ENCODE measurements at regions of chr13 and their contacts with region 1.

Region 1: DNA sequence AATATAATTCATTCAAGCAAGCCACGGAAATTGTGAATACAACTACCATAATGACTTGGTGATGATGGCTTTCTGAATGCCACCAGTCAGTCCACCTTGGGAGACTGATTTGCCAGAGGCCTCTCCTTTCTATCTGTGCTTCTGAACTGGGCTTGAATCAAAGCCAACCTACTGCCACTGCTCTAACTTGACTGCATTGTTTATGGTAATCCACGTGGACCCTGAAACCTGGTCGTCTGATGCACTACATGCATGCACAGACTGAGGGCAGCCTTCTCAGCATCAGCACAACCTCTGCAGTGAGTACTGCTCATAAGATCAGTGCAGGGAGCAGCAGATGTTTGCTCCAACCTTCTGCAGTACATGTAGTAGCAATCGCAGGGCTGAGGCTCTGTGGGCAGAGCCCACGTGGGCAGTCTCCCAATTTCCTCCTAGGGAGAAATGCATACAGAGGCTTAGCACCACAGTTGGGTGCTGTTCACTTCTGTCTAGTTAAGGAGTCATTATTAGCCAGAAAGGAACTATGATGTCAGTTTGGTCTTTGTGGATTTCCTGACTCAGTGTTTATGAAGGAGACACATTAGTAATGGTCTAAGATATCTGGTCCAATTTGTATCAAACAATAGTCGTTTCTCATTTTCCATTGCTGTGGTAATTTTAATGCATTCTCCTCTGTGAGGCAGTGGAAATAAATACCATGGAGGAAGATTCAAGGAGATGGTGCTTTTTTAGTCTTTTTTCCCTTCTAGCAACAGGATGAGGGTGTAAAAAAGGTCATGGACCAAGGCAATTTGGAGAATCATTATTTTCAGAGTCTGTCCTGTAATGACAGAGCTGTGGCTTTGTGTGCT is 82.5 kb downstream of the AKAP11 start:
- DNase-seq: peak; percentile 27 to 52 (median 37)
- H3K4me3 ChIP-seq: peak overlapping the region in 1 of 2 donors; percentile 10
- H3K4me3 Mint-ChIP-seq: peak overlapping the region; percentile 56 to 86 (median 74)
- H3K27ac ChIP-seq: peak overlapping the region; percentile 54
- H3K27ac Mint-ChIP-seq: peak overlapping the region; percentile 91 to 99 (median 93)
- H3K4me1 ChIP-seq: peaks cover 43% of the 10 kb centered on the region
- H3K4me1 Mint-ChIP-seq: peaks cover 28 to 46% (median 38%) of the 10 kb centered on the region in 4 donors
- H3K27me3 ChIP-seq: no peaks in the 10 kb centered on the region
- H3K27me3 Mint-ChIP-seq: no peaks in the 10 kb centered on the region

Region 2: GRCh38 chr13:41827507-41828213 is 526.8 kb before region 1 on chr13:
- CTCF ChIA-PET with region 1: no interaction called
- POLR2A ChIA-PET with region 1: no interaction called
- intact Hi-C with region 1: no loop called
- DNase-seq: no peak
- H3K4me3 ChIP-seq: no peak overlapping the region
- H3K4me3 Mint-ChIP-seq: no peak overlapping the region
- H3K27ac ChIP-seq: no peak overlapping the region
- H3K27ac Mint-ChIP-seq: peak overlapping the region in 1 of 7 donors; percentile 16
- H3K4me1 ChIP-seq: no peaks in the 10 kb centered on the region
- H3K4me1 Mint-ChIP-seq: no peaks in the 10 kb centered on the region
- H3K27me3 ChIP-seq: no peaks in the 10 kb centered on the region
- H3K27me3 Mint-ChIP-seq: no peaks in the 10 kb centered on the region

Region 3: DNA sequence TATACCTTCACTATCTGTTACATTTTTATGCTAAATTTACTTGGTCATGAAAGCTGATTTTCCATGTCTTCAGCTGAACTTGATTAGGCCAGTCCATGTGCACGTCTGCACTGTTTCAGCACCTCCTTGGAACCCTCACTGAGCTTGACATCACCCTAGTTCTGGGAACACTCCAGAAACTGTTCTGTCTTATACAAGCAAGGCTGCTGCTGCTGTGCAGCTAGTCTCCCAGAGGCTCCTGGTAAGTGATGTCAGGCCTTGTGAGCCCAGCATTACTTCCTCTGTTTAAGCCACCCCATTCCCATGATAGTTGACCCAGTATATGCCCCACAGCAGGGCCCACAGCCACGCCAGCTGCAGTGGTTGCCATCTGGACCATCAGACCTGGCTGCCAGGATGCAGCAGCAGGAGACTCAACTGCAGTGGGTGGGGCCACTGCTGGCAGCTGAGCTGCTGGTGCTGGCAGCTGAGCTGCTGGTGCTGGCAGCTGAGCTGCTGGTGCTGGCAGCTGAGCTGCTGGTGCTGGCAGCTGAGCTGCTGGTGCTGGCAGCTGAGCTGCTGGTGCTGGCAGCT is 173.0 kb before region 1 on chr13:
- CTCF ChIA-PET with region 1: no interaction called
- POLR2A ChIA-PET with region 1: no interaction called
- intact Hi-C with region 1: no loop called
- DNase-seq: no peak
- H3K4me3 ChIP-seq: no peak overlapping the region
- H3K4me3 Mint-ChIP-seq: no peak overlapping the region
- H3K27ac ChIP-seq: no peak overlapping the region
- H3K27ac Mint-ChIP-seq: peak overlapping the region in 3 of 7 donors; percentile 8 to 90 (median 20)
- H3K4me1 ChIP-seq: peaks cover 5% of the 10 kb centered on the region
- H3K4me1 Mint-ChIP-seq: peaks cover 2 to 5% (median 3%) of the 10 kb centered on the region in 4 donors
- H3K27me3 ChIP-seq: no peaks in the 10 kb centered on the region
- H3K27me3 Mint-ChIP-seq: no peaks in the 10 kb centered on the region

Region 4: GRCh38 chr13:42333613-42334328 is 20.7 kb before region 1 on chr13:
- CTCF ChIA-PET with region 1: interaction called, 7 read pairs
- POLR2A ChIA-PET with region 1: interaction called, 5 read pairs
- intact Hi-C with region 1: loop called (anchors 2 kb)
- DNase-seq: peak in 4 of 5 donors; percentile 24 to 40 (median 32)
- H3K4me3 ChIP-seq: no peak overlapping the region
- H3K4me3 Mint-ChIP-seq: no peak overlapping the region
- H3K27ac ChIP-seq: no peak overlapping the region
- H3K27ac Mint-ChIP-seq: peak overlapping the region in 2 of 7 donors; percentile 18 to 55
- H3K4me1 ChIP-seq: peaks cover 22% of the 10 kb centered on the region
- H3K4me1 Mint-ChIP-seq: peaks cover 13 to 27% (median 19%) of the 10 kb centered on the region in 4 donors
- H3K27me3 ChIP-seq: no peaks in the 10 kb centered on the region
- H3K27me3 Mint-ChIP-seq: no peaks in the 10 kb centered on the region

Region 5: DNA sequence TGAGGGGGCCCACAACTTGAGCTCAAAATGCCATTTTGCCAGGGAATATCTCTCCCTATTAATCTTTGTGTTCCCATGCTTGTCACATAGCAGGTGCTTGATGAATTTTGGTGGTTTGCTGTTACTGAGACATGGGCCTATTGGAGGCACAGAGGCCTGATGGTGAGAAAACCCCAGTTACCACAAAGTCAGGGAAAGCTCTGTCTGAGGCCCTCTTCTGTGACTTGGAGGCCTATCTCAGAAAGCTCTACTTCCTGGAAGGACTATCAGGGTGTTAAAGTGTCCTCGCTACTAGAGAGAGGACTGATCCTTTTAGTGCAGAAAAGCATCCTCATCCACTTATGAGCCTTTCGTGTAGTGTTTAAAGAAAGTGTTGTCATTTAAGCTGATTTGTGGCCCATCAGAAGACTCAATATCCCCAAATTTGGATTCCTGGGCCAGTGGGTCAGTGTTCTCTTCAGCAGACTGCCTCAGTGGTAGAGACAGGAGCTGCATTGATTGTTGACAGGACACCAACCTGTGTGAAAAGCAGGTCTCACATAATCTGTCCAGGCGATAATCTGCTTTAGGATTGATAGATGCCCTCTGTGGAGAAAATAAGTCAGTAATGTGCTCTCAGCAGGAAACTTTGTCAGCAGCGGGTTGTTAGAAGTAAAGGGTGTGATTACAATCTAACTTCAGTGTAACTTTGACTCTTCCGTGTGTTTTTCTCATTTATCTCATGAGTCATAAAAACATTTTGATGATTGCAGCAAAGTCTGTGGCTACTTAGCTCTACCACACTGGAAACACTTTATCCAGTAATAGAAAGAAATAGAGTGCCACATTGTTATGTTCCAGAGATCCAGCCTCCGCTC is 38.5 kb after region 1 on chr13:
- CTCF ChIA-PET with region 1: interaction called, 13 read pairs
- POLR2A ChIA-PET with region 1: interaction called, 48 read pairs
- intact Hi-C with region 1: loop called (anchors 1 kb)
- DNase-seq: peak; percentile 31 to 64 (median 48)
- H3K4me3 ChIP-seq: peak overlapping the region in 1 of 2 donors; percentile 3
- H3K4me3 Mint-ChIP-seq: peak overlapping the region; percentile 17 to 90 (median 68)
- H3K27ac ChIP-seq: peak overlapping the region; percentile 55
- H3K27ac Mint-ChIP-seq: peak overlapping the region; percentile 85 to 99 (median 94)
- H3K4me1 ChIP-seq: peaks cover 73% of the 10 kb centered on the region
- H3K4me1 Mint-ChIP-seq: peaks cover 68 to 88% (median 78%) of the 10 kb centered on the region in 4 donors
- H3K27me3 ChIP-seq: no peaks in the 10 kb centered on the region
- H3K27me3 Mint-ChIP-seq: no peaks in the 10 kb centered on the region

Region 6: GRCh38 chr13:42466123-42466522 is 111.7 kb after region 1 on chr13:
- CTCF ChIA-PET with region 1: no interaction called
- POLR2A ChIA-PET with region 1: interaction called, 4 read pairs
- intact Hi-C with region 1: loop called (anchors 2 kb)
- DNase-seq: peak in 4 of 5 donors; percentile 11 to 19 (median 14)
- H3K4me3 ChIP-seq: no peak overlapping the region
- H3K4me3 Mint-ChIP-seq: peak overlapping the region in 6 of 8 donors; percentile 41 to 72 (median 60)
- H3K27ac ChIP-seq: no peak overlapping the region
- H3K27ac Mint-ChIP-seq: peak overlapping the region; percentile 12 to 80 (median 64)
- H3K4me1 ChIP-seq: peaks cover 26% of the 10 kb centered on the region
- H3K4me1 Mint-ChIP-seq: peaks cover 17 to 37% (median 30%) of the 10 kb centered on the region in 4 donors
- H3K27me3 ChIP-seq: no peaks in the 10 kb centered on the region
- H3K27me3 Mint-ChIP-seq: no peaks in the 10 kb centered on the region

Region 7: DNA sequence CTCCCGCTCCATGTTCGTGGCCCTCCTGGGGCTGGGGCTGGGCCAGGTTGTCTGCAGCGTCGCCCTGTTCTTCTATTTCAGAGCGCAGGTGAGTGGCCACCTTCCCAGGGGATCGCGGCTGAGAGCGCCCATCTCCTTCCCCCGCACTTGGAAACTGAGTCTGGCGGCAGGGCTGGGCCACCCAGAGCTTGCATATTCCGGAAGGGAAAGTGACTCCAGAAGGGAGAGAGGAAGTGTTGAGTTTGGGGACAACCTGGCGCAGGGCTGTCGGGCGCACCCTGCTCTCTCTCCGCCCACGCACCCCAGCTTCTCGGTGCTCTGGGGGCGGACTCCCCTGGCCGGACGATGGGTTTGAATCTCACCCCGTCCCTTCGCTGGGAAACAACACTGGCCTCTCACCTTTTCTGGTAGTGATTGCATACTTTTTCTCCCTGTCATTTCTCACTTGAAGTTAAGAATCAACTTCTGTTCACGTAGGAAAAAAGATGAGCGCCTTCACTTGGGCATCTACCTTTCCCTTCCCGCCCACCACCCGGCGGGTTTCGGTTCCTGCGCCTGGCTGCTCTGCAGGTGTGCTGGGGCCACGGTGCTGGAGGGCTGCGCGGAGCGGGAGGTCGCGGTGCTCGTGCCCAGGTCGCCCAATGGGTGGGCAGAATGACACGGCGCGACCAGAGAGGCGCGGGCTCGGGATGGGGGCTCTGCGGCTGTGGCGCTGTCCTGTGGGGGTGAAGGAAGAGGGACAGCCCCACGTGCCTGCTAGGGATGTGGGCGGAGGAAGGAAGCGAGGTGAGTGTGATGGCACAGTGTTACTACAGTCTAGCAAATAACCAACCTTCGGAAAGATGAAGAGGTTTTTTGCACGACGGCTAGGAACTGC is 220.2 kb after region 1 on chr13:
- CTCF ChIA-PET with region 1: interaction called, 3 read pairs
- POLR2A ChIA-PET with region 1: no interaction called
- intact Hi-C with region 1: loop called (anchors 1 kb)
- DNase-seq: peak; percentile 25 to 50 (median 33)
- H3K4me3 ChIP-seq: peak overlapping the region; percentile 53 to 55
- H3K4me3 Mint-ChIP-seq: peak overlapping the region; percentile 86 to 91 (median 89)
- H3K27ac ChIP-seq: no peak overlapping the region
- H3K27ac Mint-ChIP-seq: peak overlapping the region; percentile 8 to 87 (median 28)
- H3K4me1 ChIP-seq: peaks cover 12% of the 10 kb centered on the region
- H3K4me1 Mint-ChIP-seq: peaks cover 12 to 36% (median 24%) of the 10 kb centered on the region in 4 donors
- H3K27me3 ChIP-seq: no peaks in the 10 kb centered on the region
- H3K27me3 Mint-ChIP-seq: peaks cover 1 to 7% of the 10 kb centered on the region in 2 donors

Region 8: GRCh38 chr13:42612021-42612765 is 257.7 kb after region 1 on chr13:
- CTCF ChIA-PET with region 1: no interaction called
- POLR2A ChIA-PET with region 1: no interaction called
- intact Hi-C with region 1: no loop called
- DNase-seq: no peak
- H3K4me3 ChIP-seq: no peak overlapping the region
- H3K4me3 Mint-ChIP-seq: no peak overlapping the region
- H3K27ac ChIP-seq: no peak overlapping the region
- H3K27ac Mint-ChIP-seq: no peak overlapping the region
- H3K4me1 ChIP-seq: no peaks in the 10 kb centered on the region
- H3K4me1 Mint-ChIP-seq: peaks cover 0 to 1% (median 0%) of the 10 kb centered on the region in 4 donors
- H3K27me3 ChIP-seq: peaks cover 3% of the 10 kb centered on the region
- H3K27me3 Mint-ChIP-seq: peaks cover 1 to 2% of the 10 kb centered on the region in 2 donors